Posterior vena cava (tissue), 2 donors: ENCODE measurements at regions of chr17 and their contacts with region 1.

Region 1: GRCh38 chr17:35529866-35530265 is 7.6 kb downstream of the SLFN12L start:
- DNase-seq: no peak

Region 2: DNA sequence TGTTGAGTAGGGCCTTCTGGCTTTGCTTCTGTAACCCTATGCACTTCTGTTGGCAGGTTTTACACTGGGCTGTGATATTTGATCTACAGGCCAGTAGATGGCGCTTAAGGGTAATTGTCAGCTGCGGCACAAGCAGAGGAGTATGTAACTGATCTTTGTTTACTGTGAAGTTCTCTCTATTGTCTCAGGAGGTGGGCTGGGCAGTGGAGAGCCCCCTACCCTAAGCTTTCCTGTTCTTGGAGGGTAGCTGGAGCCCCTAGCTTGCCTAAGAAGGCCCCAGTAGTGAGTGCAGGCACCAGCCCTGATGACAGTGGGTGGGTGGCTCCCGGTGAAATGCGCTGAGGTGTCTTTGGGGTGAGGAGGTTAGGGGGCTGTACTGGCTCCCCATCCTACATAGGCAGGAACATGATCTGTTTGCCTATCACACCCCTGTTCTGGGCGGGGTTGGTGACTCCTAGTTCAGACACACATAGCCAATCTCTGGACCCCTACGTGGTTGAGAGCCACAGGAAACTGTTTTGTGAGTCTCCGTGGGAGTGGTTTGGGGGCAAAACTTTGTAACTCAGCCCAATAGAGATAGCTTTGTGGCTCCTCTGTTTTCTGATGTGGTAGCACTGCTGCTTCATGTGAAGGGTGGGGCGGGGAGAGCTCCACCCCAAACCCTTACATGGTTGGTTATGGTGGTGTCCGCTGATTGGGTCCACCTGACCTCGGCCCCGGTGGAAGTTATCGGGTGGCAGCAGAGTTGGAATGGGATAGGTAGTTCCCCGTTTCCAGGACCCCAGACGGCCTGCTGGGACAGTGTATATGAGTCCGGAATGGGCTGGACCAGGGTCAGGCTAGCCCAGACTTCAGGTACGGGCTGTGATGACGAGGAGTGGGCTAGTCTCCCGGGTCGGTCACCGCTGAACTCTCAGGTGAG is 216.8 kb before region 1 on chr17:
- intact Hi-C with region 1: loop called in 1 of 2 experiments (anchors 5 kb)
- DNase-seq: peak; percentile 83